HepG2 (cell line): ENCODE measurements at regions of chr11 and their contacts with region 1.

Region 1: GRCh38 chr11:46504817-46505613 is 88.8 kb downstream of the AMBRA1 start:
- DNase-seq: peak; percentile 67
- ATAC-seq: peak; percentile 70
- H3K4me3 ChIP-seq: no peak overlapping the region
- H3K27ac ChIP-seq: peak overlapping the region; percentile 47
- H3K4me1 ChIP-seq: peaks cover 46% of the 10 kb centered on the region
- H3K27me3 ChIP-seq: no peaks in the 10 kb centered on the region
- CTCF ChIP-seq: no peak
- EP300 ChIP-seq: no peak
- POLR2A ChIP-seq: no peak
- RAD21 ChIP-seq: no peak

Region 2: GRCh38 chr11:46484101-46484500 is 20.9 kb before region 1 on chr11:
- CTCF ChIA-PET with region 1: no interaction called
- POLR2A ChIA-PET with region 1: no interaction called
- in situ Hi-C with region 1: no loop called
- intact Hi-C with region 1: loop called (anchors 1 kb)
- DNase-seq: no peak
- ATAC-seq: no peak
- H3K4me3 ChIP-seq: no peak overlapping the region
- H3K27ac ChIP-seq: no peak overlapping the region
- H3K4me1 ChIP-seq: no peaks in the 10 kb centered on the region
- H3K27me3 ChIP-seq: no peaks in the 10 kb centered on the region
- CTCF ChIP-seq: no peak
- EP300 ChIP-seq: no peak
- POLR2A ChIP-seq: no peak
- RAD21 ChIP-seq: no peak

Region 3: DNA sequence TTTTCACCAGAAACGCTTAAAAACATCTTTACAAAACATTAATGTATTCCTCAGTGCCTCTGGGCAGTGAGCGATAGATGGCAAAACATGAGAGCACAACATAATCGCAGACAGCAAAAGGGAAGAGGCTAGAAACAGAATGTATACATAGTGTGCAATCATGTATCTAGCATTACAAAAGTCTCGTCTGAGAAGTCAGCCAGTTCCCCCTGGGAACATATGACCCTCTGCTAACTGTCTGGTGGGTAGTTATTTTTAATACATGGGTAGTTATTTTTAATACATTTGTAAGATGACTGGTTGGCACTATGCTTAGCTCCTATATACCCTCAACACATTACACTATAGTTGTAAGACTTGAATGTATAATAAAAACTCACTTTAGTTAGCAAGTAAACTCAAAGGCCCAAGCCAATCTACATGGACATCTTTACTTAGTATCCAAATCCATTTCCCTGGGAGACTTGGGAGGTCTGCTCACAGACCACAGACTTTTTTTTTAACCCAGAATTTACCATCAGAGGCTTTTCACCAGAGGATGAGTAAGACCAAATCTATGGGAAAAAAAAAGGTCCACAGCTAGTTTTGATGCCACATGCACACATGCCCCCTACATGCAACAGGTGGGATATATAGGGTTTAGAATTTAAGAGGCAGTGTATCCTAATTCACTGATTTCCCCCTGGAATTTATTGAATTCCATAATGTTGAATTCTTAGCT is 17.1 kb after region 1 on chr11:
- CTCF ChIA-PET with region 1: no interaction called
- POLR2A ChIA-PET with region 1: no interaction called
- in situ Hi-C with region 1: no loop called
- intact Hi-C with region 1: loop called (anchors 2 kb)
- DNase-seq: no peak
- ATAC-seq: peak; percentile 29; the same call in 2 of the 3 replicates
- H3K4me3 ChIP-seq: peak overlapping the region in 1 of 3 experiments; percentile 29; a peak in 2 of 6 replicates
- H3K27ac ChIP-seq: peak overlapping the region; percentile 33
- H3K4me1 ChIP-seq: peaks cover 78% of the 10 kb centered on the region
- H3K27me3 ChIP-seq: no peaks in the 10 kb centered on the region
- CTCF ChIP-seq: 0 out of 2 replicates have a peak, but pooled peaks have one; percentile 14
- EP300 ChIP-seq: no peak
- POLR2A ChIP-seq: no peak
- RAD21 ChIP-seq: no peak